ENCODE measurements at regions of chrX and their contacts with region 1.

Region 1: GRCh38 chrX:71283403-71284143 is at the start of gene NONO:
- DNase-seq: peak; percentile 81 to 99
- ATAC-seq: peak; percentile 94 to 95
- H3K4me3 ChIP-seq: peak within 1 kb of the TSS; percentile 58
- H3K27ac ChIP-seq: peak within 1 kb of the TSS; percentile 82 to 97
- H3K4me1 ChIP-seq: peaks cover 22% of the 10 kb centered on the region
- CTCF ChIP-seq: no peak
- EP300 ChIP-seq: no peak
- POLR2A ChIP-seq: peak; percentile 49
- RAD21 ChIP-seq: no peak
- polyA plus RNA-seq, gene NONO: 362 and 631 TPM in 2 replicates

Region 2: DNA sequence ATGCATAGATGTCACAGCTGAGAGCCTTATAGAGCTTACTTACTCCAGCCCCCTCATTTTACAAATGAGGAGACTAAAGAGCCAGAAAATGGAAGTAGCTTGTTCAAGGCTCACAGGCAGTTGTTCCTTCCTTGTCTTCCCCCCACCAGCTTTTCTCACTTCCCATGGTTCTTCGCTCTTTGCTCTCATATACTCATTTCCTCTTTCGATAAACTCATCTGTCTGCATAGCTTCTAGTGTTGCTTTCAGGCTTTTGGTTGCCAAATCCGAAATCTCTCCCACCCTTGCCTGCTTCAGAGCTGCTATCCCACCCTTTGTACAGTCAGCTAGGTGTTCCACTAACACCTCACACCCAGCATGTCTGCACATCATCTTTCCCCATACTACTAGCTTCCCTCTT is 85.5 kb before region 1 on chrX:
- CTCF ChIA-PET with region 1: no interaction called
- POLR2A ChIA-PET with region 1: no interaction called
- DNase-seq: no peak
- ATAC-seq: no peak
- H3K4me3 ChIP-seq: no peak overlapping the region
- H3K27ac ChIP-seq: no peak overlapping the region
- H3K4me1 ChIP-seq: no peaks in the 10 kb centered on the region
- CTCF ChIP-seq: no peak
- EP300 ChIP-seq: no peak
- POLR2A ChIP-seq: no peak
- RAD21 ChIP-seq: no peak

Region 3: DNA sequence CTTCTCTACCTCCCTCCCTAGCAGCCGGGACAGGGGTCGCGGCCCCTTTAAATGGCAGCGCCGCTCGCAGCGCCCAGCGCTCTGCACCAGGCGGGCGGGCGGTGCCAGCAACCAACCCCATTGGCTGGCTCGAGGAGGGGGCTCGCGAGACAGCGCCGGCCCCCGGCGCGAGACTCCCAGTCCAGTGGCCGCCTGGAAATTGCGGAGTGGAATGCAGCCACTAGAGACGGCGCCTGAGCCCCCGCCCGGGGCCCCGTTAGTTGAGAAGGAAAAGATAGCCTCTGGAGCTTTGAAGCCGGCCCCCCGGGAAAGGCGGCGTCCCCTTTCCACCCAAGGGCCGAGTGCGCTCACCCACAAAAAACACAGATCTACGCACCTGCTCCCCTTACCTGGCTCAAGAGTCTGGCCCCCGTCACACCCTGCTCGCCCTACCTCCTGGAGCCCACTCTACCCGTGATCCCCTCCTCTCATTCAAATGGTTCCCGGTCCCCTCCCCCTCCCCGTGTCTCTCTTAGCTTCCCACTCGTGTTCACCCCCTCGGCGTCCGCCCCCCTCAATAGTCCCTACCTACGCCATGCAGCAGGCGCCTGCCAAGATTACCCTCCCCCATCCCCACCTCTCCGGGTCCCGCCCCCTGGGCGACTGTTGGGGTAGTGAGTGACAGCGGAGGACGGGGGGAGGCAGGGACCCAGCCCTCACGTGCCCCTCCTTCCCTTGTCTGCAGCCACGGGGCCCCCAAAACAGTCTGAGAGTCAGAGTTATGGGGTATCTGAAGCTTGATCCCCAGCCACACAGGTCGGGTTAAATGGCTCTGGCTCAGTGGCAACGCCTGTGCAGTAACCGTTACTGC is 29.3 kb before region 1 on chrX and contains the start of gene ZMYM3:
- CTCF ChIA-PET with region 1: interaction called, 4 read pairs
- POLR2A ChIA-PET with region 1: interaction called, 19 read pairs
- DNase-seq: peak; percentile 85
- ATAC-seq: peak; percentile 91 to 96
- H3K4me3 ChIP-seq: peak within 1 kb of the TSS; percentile 91
- H3K27ac ChIP-seq: peak within 1 kb of the TSS; percentile 98 to 99
- H3K4me1 ChIP-seq: peaks cover 23% of the 10 kb centered on the region
- CTCF ChIP-seq: no peak
- EP300 ChIP-seq: no peak
- POLR2A ChIP-seq: no peak; the same call in 1 of the 2 replicates
- RAD21 ChIP-seq: no peak
- polyA plus RNA-seq, gene ZMYM3: 18.8 and 23.2 TPM in 2 replicates

Region 4: GRCh38 chrX:71269801-71270395 is 13.7 kb before region 1 on chrX:
- CTCF ChIA-PET with region 1: no interaction called
- POLR2A ChIA-PET with region 1: no interaction called
- DNase-seq: no peak
- ATAC-seq: no peak
- H3K4me3 ChIP-seq: no peak overlapping the region
- H3K27ac ChIP-seq: no peak overlapping the region
- H3K4me1 ChIP-seq: no peaks in the 10 kb centered on the region
- CTCF ChIP-seq: no peak
- EP300 ChIP-seq: no peak
- POLR2A ChIP-seq: no peak
- RAD21 ChIP-seq: no peak

Region 5: GRCh38 chrX:71302461-71303213 is 19.1 kb after region 1 on chrX:
- CTCF ChIA-PET with region 1: interaction called, 5 read pairs
- POLR2A ChIA-PET with region 1: interaction called, 11 read pairs
- DNase-seq: no peak
- ATAC-seq: peak in 1 of 2 experiments; percentile 10; a peak in 2 of 6 replicates
- H3K4me3 ChIP-seq: no peak overlapping the region
- H3K27ac ChIP-seq: no peak overlapping the region
- H3K4me1 ChIP-seq: no peaks in the 10 kb centered on the region
- CTCF ChIP-seq: no peak
- EP300 ChIP-seq: no peak
- POLR2A ChIP-seq: no peak
- RAD21 ChIP-seq: no peak

Region 6: DNA sequence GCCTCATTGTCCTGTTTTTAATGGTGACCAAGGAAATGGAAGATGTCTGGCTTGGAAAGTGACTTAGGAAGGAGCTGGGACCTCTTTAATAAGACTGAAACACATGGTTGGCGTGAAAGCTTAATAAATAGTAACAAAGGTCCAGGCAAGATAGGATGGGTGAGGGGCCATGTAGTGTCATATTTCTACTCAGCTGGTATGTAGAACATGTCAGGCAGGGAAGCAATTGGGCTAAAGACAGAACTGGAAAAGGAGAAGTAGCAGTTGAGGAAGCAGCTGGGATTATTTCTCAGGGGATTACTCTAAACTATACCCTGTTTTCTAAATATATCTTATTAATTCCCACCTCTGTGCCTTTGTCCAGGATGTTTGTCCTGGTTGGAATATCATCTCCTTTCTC is 36.6 kb after region 1 on chrX:
- CTCF ChIA-PET with region 1: no interaction called
- POLR2A ChIA-PET with region 1: no interaction called
- DNase-seq: no peak
- ATAC-seq: no peak
- H3K4me3 ChIP-seq: no peak overlapping the region
- H3K27ac ChIP-seq: no peak overlapping the region
- H3K4me1 ChIP-seq: no peaks in the 10 kb centered on the region
- CTCF ChIP-seq: no peak
- EP300 ChIP-seq: no peak
- POLR2A ChIP-seq: no peak
- RAD21 ChIP-seq: no peak

Region 7: DNA sequence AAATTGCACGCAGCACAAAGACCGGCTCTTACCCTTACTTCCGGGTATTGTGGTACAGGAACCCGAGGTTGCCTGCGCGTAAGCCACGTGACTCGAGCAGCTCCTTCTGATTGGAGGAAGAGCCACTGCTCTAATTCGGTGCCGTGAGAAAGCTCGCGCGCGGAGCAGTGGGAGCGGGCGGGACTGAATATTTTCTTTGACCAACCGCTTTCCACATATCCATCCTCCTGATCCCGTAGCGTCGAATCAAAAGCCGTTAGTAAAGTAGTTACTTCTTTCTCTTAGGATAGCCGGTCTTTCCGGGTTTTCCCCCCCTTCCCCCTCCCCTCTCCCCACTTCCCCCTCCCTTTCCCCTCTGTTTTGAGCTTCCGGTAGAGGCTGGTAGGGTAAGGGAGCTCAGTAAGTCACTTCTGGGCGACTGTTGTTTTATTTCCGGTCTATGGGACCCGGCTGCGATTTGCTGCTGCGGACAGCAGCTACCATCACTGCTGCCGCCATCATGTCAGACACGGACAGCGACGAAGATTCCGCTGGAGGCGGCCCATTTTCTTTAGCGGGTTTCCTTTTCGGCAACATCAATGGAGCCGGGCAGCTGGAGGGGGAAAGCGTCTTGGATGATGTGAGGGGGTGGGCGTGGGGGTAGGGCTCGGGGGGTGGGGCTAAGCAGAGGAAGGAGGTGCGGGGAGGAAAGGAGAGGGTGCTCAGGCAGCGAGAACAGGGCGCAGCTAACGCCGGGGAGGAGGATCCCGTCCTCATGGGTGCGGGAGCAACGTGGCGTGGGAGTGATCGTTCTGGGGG is 82.5 kb after region 1 on chrX and contains the start of gene TAF1:
- CTCF ChIA-PET with region 1: no interaction called
- POLR2A ChIA-PET with region 1: interaction called, 47 read pairs
- DNase-seq: peak; percentile 97 to 98
- ATAC-seq: peak; percentile 96 to 97
- H3K4me3 ChIP-seq: peak within 1 kb of the TSS; percentile 96
- H3K27ac ChIP-seq: peak within 1 kb of the TSS; percentile 97
- H3K4me1 ChIP-seq: peaks cover 11% of the 10 kb centered on the region
- CTCF ChIP-seq: no peak
- EP300 ChIP-seq: no peak
- POLR2A ChIP-seq: peak; percentile 82; the same call in 1 of the 2 replicates
- RAD21 ChIP-seq: no peak
- polyA plus RNA-seq, gene TAF1: 29.7 and 31.3 TPM in 2 replicates

Region 8: DNA sequence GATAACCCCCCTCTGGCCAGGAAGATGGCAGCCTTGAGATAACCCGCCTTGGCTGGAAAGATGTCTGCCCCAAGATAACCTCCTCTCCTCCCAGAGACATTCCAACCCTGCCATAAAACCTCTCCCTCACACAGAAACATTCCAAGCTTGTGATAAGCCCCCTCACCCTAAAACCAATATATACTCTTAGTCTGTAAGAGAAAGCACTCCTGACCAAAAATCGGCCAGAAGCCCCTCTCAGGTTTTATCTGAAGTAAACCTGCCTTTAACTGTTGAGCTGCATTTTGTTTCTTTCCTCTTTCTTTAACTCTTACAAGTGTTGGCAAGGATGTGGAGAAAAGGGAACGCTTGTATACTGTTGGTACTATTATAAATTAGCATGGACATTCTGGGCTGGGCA is 946.7 kb after region 1 on chrX:
- CTCF ChIA-PET with region 1: no interaction called
- POLR2A ChIA-PET with region 1: no interaction called
- DNase-seq: no peak
- ATAC-seq: no peak
- H3K4me3 ChIP-seq: no peak overlapping the region
- H3K27ac ChIP-seq: no peak overlapping the region
- H3K4me1 ChIP-seq: no peaks in the 10 kb centered on the region
- CTCF ChIP-seq: no peak
- EP300 ChIP-seq: no peak
- POLR2A ChIP-seq: no peak
- RAD21 ChIP-seq: no peak